Left colon (tissue), 2 donors: ENCODE measurements at regions of chr12 and their contacts with region 1.

Region 1: GRCh38 chr12:103548622-103549601 is 38.2 kb upstream of the STAB2 start:
- DNase-seq: peak; percentile 36 to 67
- ATAC-seq: peak; percentile 64

Region 2: GRCh38 chr12:102885043-102885932 is 663.6 kb before region 1 on chr12:
- intact Hi-C with region 1: loop called in 1 of 2 experiments (anchors 5 kb)
- DNase-seq: no peak
- ATAC-seq: no peak

Region 3: GRCh38 chr12:102948941-102949352 is 600.0 kb before region 1 on chr12:
- intact Hi-C with region 1: loop called (anchors 2 to 10 kb)
- DNase-seq: peak in 1 of 2 donors; percentile 54
- ATAC-seq: no peak

Region 4: GRCh38 chr12:103334466-103334865 is 214.4 kb before region 1 on chr12:
- intact Hi-C with region 1: no loop called
- DNase-seq: no peak
- ATAC-seq: no peak